ENCODE measurements at regions of chr11 and their contacts with region 1.

Region 1: DNA sequence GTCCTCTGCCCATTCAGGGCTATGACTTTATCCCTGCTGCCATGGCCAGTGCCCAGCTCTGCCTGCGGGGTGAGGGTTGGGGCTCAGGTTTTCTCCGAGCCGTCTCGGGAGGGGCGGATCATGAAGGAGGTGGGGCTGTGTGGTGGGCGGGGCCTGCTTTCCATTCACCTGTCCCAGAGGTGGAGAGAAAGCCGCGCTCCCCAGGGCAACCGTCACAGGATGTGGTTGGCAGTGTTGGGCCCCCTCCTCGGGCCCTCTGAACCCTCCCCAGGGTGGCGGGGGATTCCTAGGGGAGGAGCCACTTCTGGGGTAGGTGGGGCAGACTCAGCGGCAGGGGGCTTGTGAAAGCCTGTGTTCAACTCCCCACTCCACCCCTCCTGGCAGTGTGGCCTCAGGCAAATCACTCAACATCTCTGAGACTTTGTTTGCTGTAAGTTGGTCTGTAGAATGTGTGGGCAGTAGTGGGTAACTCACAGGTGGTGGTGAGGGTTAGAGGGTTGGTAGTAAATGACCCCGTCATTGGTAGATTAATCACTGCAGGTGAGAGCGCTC is 50.3 kb downstream of the CD6 start:
- DNase-seq: peak; percentile 80
- ATAC-seq: peak; percentile 51
- H3K4me3 Mint-ChIP-seq: peak overlapping the region; percentile 70
- H3K27ac Mint-ChIP-seq: peak overlapping the region; percentile 90
- H3K4me1 Mint-ChIP-seq: peaks cover 67% of the 10 kb centered on the region
- H3K27me3 Mint-ChIP-seq: no peaks in the 10 kb centered on the region

Region 2: DNA sequence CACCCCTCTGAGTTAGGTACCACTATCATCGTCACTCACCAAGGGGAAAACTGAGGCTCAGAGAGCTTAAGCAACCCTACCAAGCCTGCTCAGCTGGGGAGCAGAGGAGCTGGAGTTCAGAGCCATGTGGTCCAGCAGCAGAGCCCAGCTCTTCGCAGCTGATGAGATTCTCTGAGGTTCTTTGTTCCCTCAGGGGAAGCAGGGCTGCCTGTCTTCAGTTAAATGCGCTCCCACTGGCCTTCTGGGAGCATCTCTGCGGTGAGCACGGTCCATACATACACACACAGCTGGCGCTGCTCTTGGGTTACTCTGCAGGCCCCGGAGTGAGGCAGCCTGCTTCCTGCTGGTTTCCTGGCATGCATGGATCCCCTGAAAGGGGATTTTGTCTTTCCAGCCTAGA is 160.8 kb before region 1 on chr11:
- POLR2A ChIA-PET with region 1: no interaction called
- DNase-seq: no peak
- ATAC-seq: no peak
- H3K4me3 Mint-ChIP-seq: no peak overlapping the region
- H3K27ac Mint-ChIP-seq: no peak overlapping the region
- H3K4me1 Mint-ChIP-seq: peaks cover 41% of the 10 kb centered on the region
- H3K27me3 Mint-ChIP-seq: peaks cover 6% of the 10 kb centered on the region

Region 3: DNA sequence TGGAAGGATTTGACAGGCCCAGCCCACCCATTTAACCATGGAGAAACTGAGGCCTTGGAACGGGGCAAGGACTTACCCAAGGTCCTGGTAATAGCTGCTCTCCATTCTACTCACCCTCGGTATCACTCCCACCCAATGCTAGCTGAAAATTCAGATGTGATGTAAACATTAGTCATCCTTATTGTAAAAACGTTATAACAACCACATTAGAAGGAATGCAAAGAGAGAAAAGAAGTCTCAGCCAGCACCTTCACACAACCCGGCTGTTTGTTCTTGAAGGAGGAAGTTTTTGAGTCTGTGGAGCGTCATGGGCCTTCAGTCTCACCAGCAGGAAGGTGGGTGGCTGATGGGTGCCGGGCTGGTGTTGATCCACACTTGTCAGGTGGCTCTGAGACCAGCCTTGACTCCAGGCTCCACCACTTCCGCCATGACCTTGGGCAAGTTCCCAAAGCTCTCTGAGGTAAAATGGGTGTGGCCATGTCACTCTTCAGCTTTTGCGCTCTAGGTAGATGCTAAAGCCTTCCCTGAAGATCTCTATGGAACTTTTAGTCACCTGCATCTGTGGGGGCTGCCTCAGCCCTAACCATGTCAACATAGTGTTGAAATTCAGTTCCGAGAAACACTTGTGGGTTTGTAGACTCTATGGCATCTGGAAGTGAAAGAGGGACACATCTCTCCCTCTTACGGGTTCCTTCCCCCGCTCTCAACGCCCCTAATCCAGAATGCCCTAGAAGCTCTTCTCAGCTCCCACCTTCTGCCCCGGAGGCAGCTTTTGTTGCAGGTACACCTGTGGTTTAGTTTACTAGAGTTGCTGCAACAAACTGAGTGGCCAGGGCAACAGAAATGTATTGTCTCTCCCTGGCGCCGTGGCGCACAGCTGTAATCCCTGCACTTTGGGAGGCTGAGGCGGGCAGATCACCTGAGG is 35.5 kb before region 1 on chr11:
- POLR2A ChIA-PET with region 1: interaction called, 11 read pairs
- DNase-seq: peak; percentile 77
- ATAC-seq: peak; percentile 85
- H3K4me3 Mint-ChIP-seq: peak overlapping the region; percentile 83
- H3K27ac Mint-ChIP-seq: peak overlapping the region; percentile 97
- H3K4me1 Mint-ChIP-seq: peaks cover 82% of the 10 kb centered on the region
- H3K27me3 Mint-ChIP-seq: no peaks in the 10 kb centered on the region

Region 4: GRCh38 chr11:61281581-61282250 is 260.0 kb after region 1 on chr11:
- POLR2A ChIA-PET with region 1: no interaction called
- DNase-seq: no peak
- ATAC-seq: peak; percentile 44
- H3K4me3 Mint-ChIP-seq: no peak overlapping the region
- H3K27ac Mint-ChIP-seq: no peak overlapping the region
- H3K4me1 Mint-ChIP-seq: no peaks in the 10 kb centered on the region
- H3K27me3 Mint-ChIP-seq: no peaks in the 10 kb centered on the region